ENCODE measurements at regions of chr3 and their contacts with region 1.

Region 1: DNA sequence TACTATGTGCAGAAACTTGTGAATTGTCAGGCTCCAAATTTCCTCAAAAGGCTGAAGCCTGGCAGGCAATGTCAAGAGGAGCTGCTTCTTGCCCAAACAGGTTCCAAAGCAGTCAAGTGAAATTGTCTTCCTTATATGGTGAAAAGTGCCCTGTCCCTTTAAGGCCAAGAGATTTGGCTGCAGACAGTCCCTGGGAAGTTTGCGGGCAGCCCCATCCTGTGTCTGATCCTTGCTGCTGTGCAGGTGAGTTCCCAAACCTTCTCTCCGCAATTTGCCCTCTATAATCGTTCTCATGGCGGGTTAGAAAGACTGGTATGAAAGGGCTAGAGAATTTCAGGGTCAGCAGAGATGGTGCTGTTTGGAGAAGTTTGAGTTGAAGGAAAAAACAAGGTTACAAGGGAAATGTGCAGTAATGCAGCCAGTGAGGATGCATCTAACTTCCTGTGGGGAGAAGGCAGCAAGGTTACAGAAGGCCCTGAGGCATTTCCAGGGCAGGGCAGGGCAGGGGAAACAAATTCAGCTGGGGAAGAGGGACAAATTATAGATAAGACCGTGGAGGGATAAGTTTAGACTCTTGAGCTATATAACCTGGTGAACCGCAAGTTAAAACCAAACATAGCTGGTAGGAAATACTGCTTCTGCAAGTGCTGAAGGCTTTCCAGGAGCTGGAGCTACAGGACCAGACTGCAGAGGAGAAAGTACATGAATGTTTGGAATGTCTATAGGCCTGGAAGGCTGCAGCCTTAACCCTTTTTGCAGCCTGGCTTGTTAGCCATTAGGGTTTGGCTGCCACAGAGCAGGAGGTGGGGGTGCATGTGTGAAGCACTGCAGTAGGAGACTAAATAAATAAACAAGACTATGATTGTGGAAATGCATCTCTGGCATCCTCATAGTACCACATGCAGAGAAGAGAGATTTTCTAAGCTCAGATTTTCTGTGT is 256.2 kb upstream of the IL12A start:
- DNase-seq: peak; percentile 69 to 70
- H3K4me3 ChIP-seq: peak overlapping the region; percentile 40
- H3K4me3 Mint-ChIP-seq: peak overlapping the region; percentile 95
- H3K27ac Mint-ChIP-seq: peak overlapping the region; percentile 80
- H3K4me1 ChIP-seq: peaks cover 45% of the 10 kb centered on the region
- H3K4me1 Mint-ChIP-seq: peaks cover 23% of the 10 kb centered on the region
- H3K27me3 ChIP-seq: no peaks in the 10 kb centered on the region
- H3K27me3 Mint-ChIP-seq: no peaks in the 10 kb centered on the region
- CTCF ChIP-seq: peak in 1 of 2 experiments; percentile 21

Region 2: DNA sequence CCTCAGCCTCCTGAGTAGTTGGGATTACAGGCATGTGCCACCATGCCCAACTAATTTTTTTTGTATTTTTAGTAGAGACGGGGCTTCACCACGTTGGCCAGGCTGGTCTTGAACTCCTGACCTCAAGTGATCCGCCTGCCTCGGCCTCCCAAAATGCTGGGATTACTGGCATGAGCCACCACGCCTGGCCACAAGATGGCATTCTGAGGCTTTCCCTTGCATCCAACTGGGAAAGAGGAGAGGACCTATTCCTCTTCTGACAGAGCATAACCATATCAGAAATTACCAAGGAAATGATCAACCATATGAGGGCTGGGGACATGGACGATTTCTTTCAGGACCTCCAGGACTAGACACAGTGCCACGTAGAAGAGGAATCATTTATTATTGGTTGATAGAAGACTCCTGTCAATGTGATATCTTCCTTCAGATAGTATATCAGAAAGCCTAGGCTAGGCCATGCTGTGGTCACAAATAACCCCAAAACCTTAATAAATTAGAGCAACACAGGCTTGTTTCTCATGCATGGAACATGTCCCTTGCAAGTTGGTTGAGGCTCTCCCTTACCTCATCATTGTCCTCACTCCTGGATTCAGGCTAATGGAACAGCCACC is 116.1 kb before region 1 on chr3:
- CTCF ChIA-PET with region 1: interaction called, 3 read pairs
- POLR2A ChIA-PET with region 1: no interaction called
- intact Hi-C with region 1: loop called (anchors 1 kb)
- DNase-seq: peak; percentile 72 to 73
- H3K4me3 ChIP-seq: no peak overlapping the region
- H3K4me3 Mint-ChIP-seq: no peak overlapping the region
- H3K27ac Mint-ChIP-seq: no peak overlapping the region
- H3K4me1 ChIP-seq: peaks cover 6% of the 10 kb centered on the region
- H3K4me1 Mint-ChIP-seq: no peaks in the 10 kb centered on the region
- H3K27me3 ChIP-seq: no peaks in the 10 kb centered on the region
- H3K27me3 Mint-ChIP-seq: no peaks in the 10 kb centered on the region
- CTCF ChIP-seq: peak; percentile 51 to 65

Region 3: GRCh38 chr3:159668990-159669476 is 63.4 kb before region 1 on chr3:
- CTCF ChIA-PET with region 1: no interaction called
- POLR2A ChIA-PET with region 1: no interaction called
- intact Hi-C with region 1: loop called (anchors 1 kb)
- DNase-seq: peak; percentile 72 to 73
- H3K4me3 ChIP-seq: no peak overlapping the region
- H3K4me3 Mint-ChIP-seq: peak overlapping the region; percentile 61
- H3K27ac Mint-ChIP-seq: peak overlapping the region; percentile 90
- H3K4me1 ChIP-seq: peaks cover 60% of the 10 kb centered on the region
- H3K4me1 Mint-ChIP-seq: peaks cover 32% of the 10 kb centered on the region
- H3K27me3 ChIP-seq: no peaks in the 10 kb centered on the region
- H3K27me3 Mint-ChIP-seq: no peaks in the 10 kb centered on the region
- CTCF ChIP-seq: no peak

Region 4: DNA sequence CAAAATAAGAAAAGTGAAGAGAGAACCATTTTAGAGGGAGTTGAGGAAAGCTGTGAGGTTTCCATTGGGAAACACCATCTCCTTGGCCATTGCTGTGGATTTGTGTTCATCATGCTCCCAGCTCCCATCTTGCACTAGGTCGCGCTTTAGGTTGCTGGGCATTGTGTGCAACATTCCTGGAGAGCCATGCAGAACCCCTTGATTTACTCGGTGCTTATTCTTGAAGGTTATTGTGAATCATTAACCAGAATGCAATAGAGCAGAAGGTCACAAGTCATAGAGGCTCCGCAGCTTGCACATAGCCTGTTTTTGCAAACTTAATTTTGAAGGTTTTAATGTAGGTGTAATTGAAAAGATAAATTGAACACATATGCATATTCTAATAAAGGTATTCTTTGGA is 17.0 kb after region 1 on chr3:
- CTCF ChIA-PET with region 1: no interaction called
- POLR2A ChIA-PET with region 1: no interaction called
- intact Hi-C with region 1: loop called (anchors 1 kb)
- DNase-seq: peak; percentile 50 to 72
- H3K4me3 ChIP-seq: no peak overlapping the region
- H3K4me3 Mint-ChIP-seq: peak overlapping the region; percentile 39
- H3K27ac Mint-ChIP-seq: no peak overlapping the region
- H3K4me1 ChIP-seq: peaks cover 17% of the 10 kb centered on the region
- H3K4me1 Mint-ChIP-seq: peaks cover 16% of the 10 kb centered on the region
- H3K27me3 ChIP-seq: no peaks in the 10 kb centered on the region
- H3K27me3 Mint-ChIP-seq: no peaks in the 10 kb centered on the region
- CTCF ChIP-seq: no peak

Region 5: GRCh38 chr3:159787191-159787590 is 54.7 kb after region 1 on chr3:
- CTCF ChIA-PET with region 1: interaction called, 4 read pairs
- POLR2A ChIA-PET with region 1: interaction called, 4 read pairs
- intact Hi-C with region 1: loop called (anchors 1 kb)
- DNase-seq: peak; percentile 67 to 78
- H3K4me3 ChIP-seq: no peak overlapping the region
- H3K4me3 Mint-ChIP-seq: peak overlapping the region; percentile 65
- H3K27ac Mint-ChIP-seq: peak overlapping the region; percentile 96
- H3K4me1 ChIP-seq: peaks cover 99% of the 10 kb centered on the region
- H3K4me1 Mint-ChIP-seq: peaks cover 65% of the 10 kb centered on the region
- H3K27me3 ChIP-seq: no peaks in the 10 kb centered on the region
- H3K27me3 Mint-ChIP-seq: no peaks in the 10 kb centered on the region
- CTCF ChIP-seq: no peak